ENCODE measurements at regions of chr13 and their contacts with region 1.

Region 1: GRCh38 chr13:22828081-22828480 is 352.7 kb upstream of the SGCG start:
- DNase-seq: no peak
- ATAC-seq: no peak
- H3K4me3 Mint-ChIP-seq: no peak overlapping the region
- H3K27ac Mint-ChIP-seq: no peak overlapping the region
- H3K4me1 Mint-ChIP-seq: no peaks in the 10 kb centered on the region
- H3K27me3 Mint-ChIP-seq: peaks cover 3% of the 10 kb centered on the region

Region 2: DNA sequence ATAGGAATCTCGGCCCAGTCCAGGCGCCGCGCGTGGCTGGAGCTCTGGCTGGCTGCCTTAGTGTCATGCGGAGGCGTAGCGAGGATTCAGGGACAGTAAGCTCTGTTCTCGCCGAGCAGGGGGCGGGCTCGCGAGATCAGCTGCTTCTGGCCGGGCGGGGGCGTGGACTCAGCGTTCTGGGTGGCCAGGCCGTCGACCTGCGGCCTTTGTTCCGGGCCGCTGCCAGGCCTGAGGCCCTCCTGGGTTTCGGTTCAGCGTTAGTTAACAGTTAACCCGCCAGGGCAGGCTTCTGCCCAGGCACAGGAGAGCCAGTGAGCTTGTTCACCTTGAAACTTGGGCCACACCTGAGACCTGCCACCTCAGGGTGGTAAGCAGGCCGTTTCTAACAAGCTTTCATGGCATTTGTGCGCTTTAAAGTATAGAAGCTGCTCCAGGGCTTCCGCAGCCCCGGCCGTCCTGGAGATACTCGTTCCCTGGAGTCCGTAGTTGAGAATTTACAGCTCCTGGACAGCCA is 20.5 kb after region 1 on chr13:
- CTCF ChIA-PET with region 1: no interaction called
- POLR2A ChIA-PET with region 1: no interaction called
- intact Hi-C with region 1: loop called (anchors 1 kb)
- DNase-seq: no peak
- ATAC-seq: no peak
- H3K4me3 Mint-ChIP-seq: no peak overlapping the region
- H3K27ac Mint-ChIP-seq: no peak overlapping the region
- H3K4me1 Mint-ChIP-seq: no peaks in the 10 kb centered on the region
- H3K27me3 Mint-ChIP-seq: peaks cover 5% of the 10 kb centered on the region

Region 3: GRCh38 chr13:22960827-22961226 is 132.7 kb after region 1 on chr13:
- CTCF ChIA-PET with region 1: no interaction called
- POLR2A ChIA-PET with region 1: no interaction called
- intact Hi-C with region 1: no loop called
- DNase-seq: no peak
- ATAC-seq: no peak
- H3K4me3 Mint-ChIP-seq: no peak overlapping the region
- H3K27ac Mint-ChIP-seq: no peak overlapping the region
- H3K4me1 Mint-ChIP-seq: no peaks in the 10 kb centered on the region
- H3K27me3 Mint-ChIP-seq: no peaks in the 10 kb centered on the region

Measured in activated CD4-positive, alpha-beta T cell treated with anti-CD3 and anti-CD28 coated beads for 36 hours (primary cell).